ENCODE measurements at regions of chr2 and their contacts with region 1.

Region 1: DNA sequence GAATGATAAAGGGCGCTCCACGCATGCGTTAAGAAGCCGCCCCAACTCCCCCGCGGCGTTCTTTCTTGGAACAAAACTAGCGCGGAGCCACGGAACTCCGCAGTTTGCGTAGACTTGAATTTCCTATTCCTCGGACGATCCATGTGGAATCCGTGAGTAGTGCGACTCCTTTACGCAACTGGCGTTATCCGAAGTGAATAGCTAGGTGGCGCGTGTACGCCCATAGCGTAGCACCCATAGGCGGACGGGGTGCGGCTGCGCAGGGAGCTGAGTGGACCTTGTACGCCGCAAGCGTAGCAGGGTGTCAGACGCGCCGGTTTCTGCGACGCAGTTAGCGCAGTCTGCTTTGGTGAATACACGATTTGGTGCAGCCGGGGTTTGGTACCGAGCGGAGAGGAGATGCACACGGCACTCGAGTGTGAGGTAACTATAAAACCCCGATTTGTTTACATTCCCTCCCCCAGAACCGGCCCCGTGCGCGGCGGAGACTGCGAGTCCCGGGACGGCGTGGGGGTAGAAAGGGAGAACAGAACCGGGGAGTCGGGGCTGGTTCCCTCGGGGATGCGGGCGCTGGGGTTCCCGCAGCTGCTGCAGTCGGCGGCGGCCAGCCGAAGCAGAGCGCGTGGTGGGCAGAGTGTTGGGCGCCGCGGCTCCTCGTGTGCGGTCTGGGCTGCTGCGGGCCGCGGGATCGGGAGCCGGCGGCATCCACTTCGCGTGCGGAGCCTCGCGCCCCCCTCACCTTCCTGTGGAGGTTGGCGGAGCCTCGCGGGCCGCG is at the start of gene SLC39A10:
- DNase-seq: peak; percentile 99
- ATAC-seq: peak; percentile 93
- total RNA-seq, gene SLC39A10: 9.6 TPM

Region 2: GRCh38 chr2:195575879-195576401 is 81.1 kb before region 1 on chr2:
- intact Hi-C with region 1: loop called (anchors 5 kb)
- DNase-seq: no peak
- ATAC-seq: peak; percentile 76

Region 3: DNA sequence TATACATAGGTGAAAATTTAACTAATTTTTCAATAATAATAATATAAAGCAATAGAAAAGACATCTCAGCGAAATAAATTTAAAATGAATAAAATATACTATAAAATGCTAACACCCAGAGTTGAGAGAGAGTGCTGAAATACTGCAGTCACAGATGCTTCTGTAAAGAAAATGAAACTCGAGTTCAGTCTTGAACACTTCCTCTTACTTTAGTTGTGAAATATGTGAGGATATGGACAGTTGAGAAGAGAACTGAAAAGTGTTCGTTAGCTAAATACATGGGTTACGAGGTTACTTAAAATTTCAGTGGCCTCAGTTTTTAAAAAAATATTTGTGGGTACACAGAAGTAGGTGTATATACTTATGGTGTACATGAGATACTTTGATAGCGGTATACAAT is 304.8 kb after region 1 on chr2:
- intact Hi-C with region 1: no loop called
- DNase-seq: no peak
- ATAC-seq: no peak

Region 4: DNA sequence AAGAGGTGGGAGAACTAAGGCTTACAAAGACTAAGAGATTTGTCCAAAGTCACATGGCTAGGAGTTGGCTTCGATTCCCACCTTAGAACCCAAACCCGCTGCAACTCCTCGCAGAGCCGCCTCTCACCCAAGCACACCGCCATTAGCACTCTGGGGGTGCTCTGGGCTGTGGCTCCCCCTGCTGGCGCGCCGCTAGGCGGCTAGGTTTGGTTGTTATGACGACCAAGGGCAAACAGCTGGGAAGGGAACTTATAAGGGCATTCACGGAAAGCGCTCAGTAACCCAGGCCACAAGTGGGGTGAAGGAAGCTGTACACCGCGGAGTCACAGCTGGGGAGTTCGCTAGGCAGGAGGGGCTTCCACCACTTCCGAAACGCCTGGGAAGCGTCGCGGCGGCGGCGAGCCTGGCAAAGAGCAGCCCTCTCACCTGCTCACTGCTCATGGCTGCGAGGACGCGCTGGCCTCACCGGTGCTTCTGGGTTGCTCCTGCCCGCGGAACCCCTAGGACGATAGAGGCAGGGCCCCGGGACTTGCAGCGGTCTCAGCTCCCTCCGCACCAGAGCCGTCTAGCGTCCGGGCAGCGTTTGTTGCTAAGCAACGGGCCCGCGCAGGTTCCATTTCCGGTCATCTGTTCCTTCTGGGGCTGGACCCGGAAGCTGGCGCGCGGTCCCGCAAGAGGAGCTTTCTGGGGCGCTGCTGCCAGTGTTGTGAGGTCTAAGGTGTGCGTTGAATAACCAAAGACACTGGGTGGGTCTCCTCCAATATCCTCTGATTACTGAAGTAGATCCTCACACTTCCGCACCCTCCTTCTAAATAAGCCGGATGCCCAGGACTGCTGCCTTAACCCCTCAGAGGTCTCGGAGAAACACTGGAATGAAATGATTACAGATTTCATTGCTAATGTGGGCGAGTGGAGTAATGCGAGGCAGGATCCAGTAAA is 411.5 kb after region 1 on chr2 and contains the start of gene DNAH7:
- intact Hi-C with region 1: loop called (anchors 10 kb)
- DNase-seq: peak; percentile 95
- ATAC-seq: peak; percentile 99
- total RNA-seq, gene DNAH7: 0.40 TPM

Measured in Right ventricle myocardium superior (tissue), 1 donor.